ENCODE measurements at regions of chr15 and their contacts with region 1.

Region 1: DNA sequence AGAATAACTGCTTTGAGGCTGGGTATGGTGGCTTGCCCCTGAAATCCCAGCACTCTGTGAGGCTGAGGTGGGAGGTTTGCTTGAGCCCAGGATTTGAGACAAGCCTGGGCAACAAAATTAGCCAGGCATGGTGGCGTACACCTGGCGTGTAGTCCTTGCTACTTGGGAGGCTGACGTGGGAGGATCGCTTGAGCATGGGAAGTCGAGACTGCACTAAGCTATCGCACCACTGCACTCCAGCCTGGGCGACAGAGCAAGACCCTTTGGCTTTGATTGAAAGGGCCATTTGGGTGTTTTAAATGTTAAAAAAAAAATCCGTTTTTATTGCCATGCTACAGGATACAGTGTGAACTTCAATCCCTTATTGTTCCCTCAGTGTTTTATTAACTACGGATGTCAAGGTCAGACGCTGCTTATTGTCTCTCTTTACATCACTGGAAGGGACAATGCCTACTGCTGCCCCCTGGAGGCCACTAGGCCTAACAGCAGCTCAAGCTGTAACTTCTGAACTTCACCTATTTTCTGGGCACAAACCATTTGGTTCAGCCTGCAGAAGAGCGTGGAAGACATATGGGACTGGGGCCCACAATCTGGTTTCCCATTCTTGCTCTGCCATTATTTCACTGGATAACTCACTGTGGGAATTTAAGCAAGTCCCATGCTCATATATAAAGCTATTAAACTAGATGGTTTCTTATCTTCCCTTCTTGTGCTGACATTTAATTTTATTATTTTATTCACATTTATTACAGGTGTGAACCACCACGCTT is 15.3 kb upstream of the IREB2 start:
- DNase-seq: peak; percentile 76
- CTCF ChIP-seq: peak; percentile 94

Region 2: DNA sequence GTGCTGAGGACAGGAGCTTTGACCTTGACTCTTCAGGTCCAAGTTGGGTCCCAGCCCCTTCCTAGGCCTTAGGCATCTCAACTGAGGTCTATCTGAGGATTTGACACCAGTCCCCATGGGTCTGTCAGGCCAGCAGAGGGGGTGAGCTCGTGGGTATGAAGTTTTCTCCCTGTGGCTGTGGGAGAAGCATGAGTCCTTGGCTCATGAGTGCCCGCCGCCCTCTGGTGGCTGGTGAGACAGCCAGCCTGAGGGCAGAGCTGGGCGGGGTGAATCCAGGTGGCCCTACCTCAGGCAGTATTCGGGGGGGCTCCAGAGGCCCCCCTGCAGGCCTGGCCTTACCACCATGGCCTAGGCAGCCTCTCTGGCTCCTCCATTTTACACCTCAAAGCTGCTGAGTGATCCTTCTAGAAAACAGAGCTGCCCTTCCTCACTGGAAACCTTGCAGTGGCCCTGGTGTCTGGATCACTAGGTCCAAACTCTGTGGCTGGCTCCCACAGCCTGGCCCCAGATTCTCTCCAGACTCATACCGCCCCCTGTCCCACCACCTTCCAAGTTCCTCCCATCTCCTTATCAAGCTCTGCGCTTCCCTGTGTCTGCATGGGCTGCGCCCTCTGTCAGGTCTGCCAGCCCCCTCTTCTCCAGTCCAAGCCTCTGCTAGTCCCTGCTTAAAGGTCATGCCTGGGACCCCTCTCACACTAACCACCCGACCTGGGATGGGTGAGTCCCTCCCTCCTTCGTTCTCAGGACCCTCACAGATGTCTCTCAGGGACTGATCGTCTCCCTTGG is 314.3 kb before region 1 on chr15:
- in situ Hi-C with region 1: no loop called
- DNase-seq: peak; percentile 81
- CTCF ChIP-seq: peak; percentile 98

Region 3: DNA sequence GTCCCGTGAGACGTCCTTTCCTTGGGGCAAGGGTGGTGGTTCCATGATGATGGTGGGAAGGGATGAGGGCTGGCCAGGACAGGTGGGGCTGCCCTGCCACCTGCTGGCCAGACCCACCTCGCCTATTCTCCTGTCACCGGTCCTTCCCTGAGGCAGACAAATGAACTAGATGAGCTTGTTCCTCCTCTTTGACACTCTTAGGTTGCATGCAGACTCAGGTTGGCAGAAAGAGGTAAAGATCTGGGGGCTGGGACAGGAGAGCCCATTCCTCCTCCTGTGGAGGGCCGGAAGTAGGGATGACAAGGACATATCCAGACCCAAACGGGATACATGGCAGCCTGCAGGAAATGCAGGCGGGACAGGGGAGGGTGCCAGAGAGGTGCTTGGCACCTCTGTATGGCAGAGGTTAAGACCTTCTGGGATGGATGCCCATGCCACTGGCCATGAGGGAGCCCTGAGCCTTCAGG is 227.0 kb before region 1 on chr15:
- in situ Hi-C with region 1: no loop called
- DNase-seq: peak; percentile 85
- CTCF ChIP-seq: peak; percentile 96

Region 4: DNA sequence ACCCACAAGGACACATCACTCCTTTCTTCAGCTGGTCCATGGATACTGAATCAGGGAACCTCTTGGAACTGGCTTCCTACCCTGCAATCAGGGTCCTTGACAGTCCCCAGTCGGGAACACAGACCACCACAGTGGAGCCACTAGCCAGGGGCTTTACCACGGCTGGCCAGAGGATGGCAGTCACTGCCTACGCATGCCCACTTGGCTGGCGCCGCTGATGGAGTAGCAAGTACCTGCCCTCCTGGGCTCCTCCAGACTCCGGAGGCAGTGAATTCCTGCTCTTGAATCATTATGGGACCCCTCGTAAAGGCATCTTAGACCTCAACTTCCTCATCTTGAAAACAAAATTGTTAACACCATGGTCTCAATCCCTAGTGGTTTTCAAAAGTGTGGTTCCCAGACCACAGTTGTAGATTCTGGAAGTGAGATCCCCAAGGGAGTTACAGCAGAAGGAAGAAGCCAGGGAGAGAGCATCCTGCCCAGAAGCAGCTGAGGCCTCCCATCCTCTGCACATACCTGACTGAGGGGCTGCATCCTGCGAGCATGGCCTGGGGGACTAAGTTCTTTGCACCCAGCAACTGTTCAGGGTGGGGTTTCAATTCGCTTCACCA is 114.2 kb before region 1 on chr15:
- in situ Hi-C with region 1: loop called (anchors 10 kb)
- DNase-seq: peak; percentile 73
- CTCF ChIP-seq: peak; percentile 85